Sigmoid colon (tissue), 7 donors: ENCODE measurements at regions of chr10 and their contacts with region 1.

Region 1: GRCh38 chr10:15433850-15434537 is 62.9 kb upstream of the FAM171A1 start:
- DNase-seq: no peak
- H3K4me3 ChIP-seq: peak overlapping the region in 3 of 4 donors; percentile 35 to 42 (median 37)
- H3K27ac ChIP-seq: no peak overlapping the region
- H3K4me1 ChIP-seq: peaks cover 0 to 5% (median 0%) of the 10 kb centered on the region in 4 donors
- H3K27me3 ChIP-seq: no peaks in the 10 kb centered on the region
- CTCF ChIP-seq: peak; percentile 42 to 72 (median 66)
- EP300 ChIP-seq: no peak
- POLR2A ChIP-seq: no peak

Region 2: GRCh38 chr10:15348579-15348978 is 85.4 kb before region 1 on chr10:
- intact Hi-C with region 1: no loop called
- DNase-seq: no peak
- H3K4me3 ChIP-seq: peak overlapping the region in 3 of 4 donors; percentile 14 to 26 (median 22)
- H3K27ac ChIP-seq: peak overlapping the region in 3 of 4 donors; percentile 7 to 17 (median 8)
- H3K4me1 ChIP-seq: peaks cover 0 to 23% (median 6%) of the 10 kb centered on the region in 4 donors
- H3K27me3 ChIP-seq: no peaks in the 10 kb centered on the region
- CTCF ChIP-seq: no peak
- EP300 ChIP-seq: no peak
- POLR2A ChIP-seq: no peak

Region 3: DNA sequence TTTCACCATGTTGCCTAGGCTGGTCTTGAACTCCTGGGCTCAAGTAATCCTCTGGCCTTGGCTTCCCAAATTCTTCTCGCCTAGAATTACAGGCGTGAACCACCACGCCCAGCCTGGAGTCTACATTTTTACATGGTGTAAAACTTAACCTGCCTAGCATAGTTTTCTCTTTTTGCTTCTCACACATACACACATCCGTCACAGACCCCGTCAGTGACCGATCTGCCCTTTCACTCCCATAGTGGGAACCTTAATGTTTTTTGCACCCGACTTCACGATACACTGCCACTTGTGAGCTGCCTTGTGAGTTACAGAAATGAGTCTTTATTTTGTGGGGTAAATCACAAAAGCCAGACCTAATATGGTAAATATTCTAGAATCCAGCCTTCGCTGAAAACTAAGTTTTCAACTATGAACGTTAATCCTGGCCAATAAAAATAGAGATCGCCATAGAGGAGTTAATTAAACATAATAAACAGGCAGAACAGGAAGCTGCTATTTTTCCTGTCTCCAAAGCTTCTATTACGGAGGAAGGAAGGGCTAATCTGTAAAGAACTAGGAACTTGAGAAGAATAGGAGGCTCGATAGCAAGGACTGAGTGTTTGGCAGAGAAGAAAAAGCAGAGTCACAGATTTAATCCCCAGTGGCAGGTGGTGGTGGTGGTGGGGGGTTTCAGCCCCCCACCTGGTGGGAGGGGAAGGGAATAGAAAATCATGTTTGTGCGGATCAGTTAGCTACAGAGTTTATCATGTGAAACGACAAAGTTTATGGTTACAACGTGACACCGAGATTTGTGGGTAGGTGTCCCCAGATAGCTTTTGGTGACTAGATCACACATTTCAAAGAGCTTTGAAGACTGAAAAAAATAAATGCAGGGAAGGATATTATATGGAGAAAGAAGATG is 48.2 kb before region 1 on chr10:
- intact Hi-C with region 1: no loop called
- DNase-seq: no peak
- H3K4me3 ChIP-seq: no peak overlapping the region
- H3K27ac ChIP-seq: no peak overlapping the region
- H3K4me1 ChIP-seq: no peaks in the 10 kb centered on the region
- H3K27me3 ChIP-seq: no peaks in the 10 kb centered on the region
- CTCF ChIP-seq: no peak
- EP300 ChIP-seq: no peak
- POLR2A ChIP-seq: no peak

Region 4: GRCh38 chr10:15585303-15585715 is 151.3 kb after region 1 on chr10:
- intact Hi-C with region 1: no loop called
- DNase-seq: no peak
- H3K4me3 ChIP-seq: no peak overlapping the region
- H3K27ac ChIP-seq: no peak overlapping the region
- H3K4me1 ChIP-seq: no peaks in the 10 kb centered on the region
- H3K27me3 ChIP-seq: no peaks in the 10 kb centered on the region
- CTCF ChIP-seq: peak in 2 of 4 experiments; percentile 29 to 57
- EP300 ChIP-seq: no peak
- POLR2A ChIP-seq: no peak

Region 5: DNA sequence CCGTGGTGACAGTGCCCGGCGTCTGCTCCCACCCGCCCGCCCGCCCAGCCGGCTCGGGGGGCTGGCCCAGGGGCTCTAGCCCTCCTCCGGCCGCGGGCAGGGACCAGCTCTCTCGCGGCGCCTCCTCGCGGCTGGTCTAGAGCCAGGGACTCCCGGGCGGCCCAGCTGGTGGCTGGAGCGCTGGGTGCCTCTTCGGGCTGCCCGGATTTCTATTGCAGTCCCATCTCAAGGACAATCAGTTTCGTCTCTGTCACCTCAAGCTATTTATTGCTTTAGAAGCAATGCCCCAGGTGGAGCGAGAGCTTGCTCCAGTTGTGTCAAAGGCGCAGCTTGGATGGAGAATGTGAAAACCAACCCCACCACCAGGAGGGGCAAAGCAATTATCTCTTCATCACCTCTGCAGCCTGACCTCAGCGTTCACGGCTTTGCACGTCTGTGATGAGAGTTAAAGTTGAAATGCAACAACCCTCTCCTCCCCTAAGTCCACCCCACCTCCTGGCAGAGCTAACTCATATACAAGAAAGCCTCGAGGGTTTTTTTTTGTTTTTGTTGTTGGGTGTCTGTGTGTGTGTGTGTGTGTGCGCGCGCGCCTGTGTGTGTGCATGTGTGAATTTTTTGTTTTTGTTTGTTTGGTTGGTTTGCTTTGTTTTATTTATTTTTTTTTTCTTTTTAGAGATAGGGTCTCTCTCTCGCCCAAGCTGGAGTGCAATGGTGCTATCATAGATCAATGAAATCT is 286.1 kb after region 1 on chr10 and contains the start of gene ITGA8:
- intact Hi-C with region 1: loop called (anchors 5 kb)
- DNase-seq: no peak
- H3K4me3 ChIP-seq: peak within 1 kb of the TSS; percentile 22 to 53 (median 50)
- H3K27ac ChIP-seq: peak within 1 kb of the TSS in 2 of 4 donors; percentile 36 to 70
- H3K4me1 ChIP-seq: peaks cover 0 to 25% (median 23%) of the 10 kb centered on the region in 4 donors
- H3K27me3 ChIP-seq: peaks cover 9 to 42% (median 22%) of the 10 kb centered on the region in 3 donors
- CTCF ChIP-seq: peak in 3 of 4 experiments; percentile 22 to 40 (median 31)
- EP300 ChIP-seq: no peak
- POLR2A ChIP-seq: no peak
- total RNA-seq, gene ITGA8: 0.66 to 5.7 (median 1.5) TPM

Region 6: DNA sequence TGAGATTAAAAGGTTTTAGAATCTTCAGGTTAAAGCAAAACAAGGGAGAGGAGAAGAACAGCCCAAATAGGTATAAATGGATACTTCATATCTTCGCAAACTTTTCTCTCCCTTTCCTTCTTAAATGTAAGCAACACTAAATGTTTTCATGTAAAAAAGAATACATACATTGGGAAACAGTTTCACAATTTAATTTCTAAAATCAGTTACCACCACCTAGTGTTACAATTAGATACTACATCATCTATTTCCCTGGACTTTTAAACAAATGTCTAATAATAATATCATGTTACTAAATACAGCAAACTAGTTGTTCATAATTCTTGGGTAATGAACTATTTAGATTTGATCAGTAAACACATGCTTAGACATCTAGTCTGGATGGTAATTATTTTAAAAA is 390.5 kb after region 1 on chr10:
- intact Hi-C with region 1: loop called (anchors 2 kb)
- DNase-seq: no peak
- H3K4me3 ChIP-seq: no peak overlapping the region
- H3K27ac ChIP-seq: no peak overlapping the region
- H3K4me1 ChIP-seq: no peaks in the 10 kb centered on the region
- H3K27me3 ChIP-seq: no peaks in the 10 kb centered on the region
- CTCF ChIP-seq: peak; percentile 28 to 59 (median 51)
- EP300 ChIP-seq: no peak
- POLR2A ChIP-seq: no peak